Transverse colon (tissue), 4 donors: ENCODE measurements at regions of chr13 and their contacts with region 1.

Region 1: DNA sequence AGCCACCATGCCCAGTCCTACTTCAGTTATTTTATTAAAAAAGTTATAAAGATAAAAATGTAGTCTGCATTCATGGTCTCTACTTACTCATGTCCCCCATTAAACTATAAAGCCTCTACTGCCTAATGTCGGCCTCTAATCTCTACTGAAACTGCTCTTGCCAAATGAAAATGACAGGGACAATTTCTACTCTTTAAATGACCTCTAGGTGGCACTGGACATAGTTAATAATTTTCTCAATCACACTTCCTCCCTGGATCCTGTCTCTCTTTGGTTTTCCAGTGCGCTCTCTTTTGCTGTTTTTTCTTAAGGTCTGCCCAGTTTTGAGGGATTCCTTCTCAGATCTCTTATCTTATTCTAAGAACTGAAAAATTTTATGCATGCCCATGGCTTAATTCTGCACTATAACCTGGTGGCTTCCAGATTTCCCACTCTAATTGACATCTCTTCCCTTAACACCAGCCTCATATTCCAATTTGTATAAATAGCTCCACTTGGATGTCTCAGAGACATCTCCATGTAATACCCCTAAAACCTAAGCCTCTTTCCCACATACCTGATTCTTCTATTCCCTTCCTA is 54.3 kb downstream of the MTMR6 start:
- DNase-seq: no peak
- H3K4me3 ChIP-seq: no peak overlapping the region
- H3K27ac ChIP-seq: no peak overlapping the region
- H3K4me1 ChIP-seq: peaks cover 0 to 5% (median 1%) of the 10 kb centered on the region in 4 donors
- H3K27me3 ChIP-seq: peaks cover 3% of the 10 kb centered on the region
- CTCF ChIP-seq: peak; percentile 46 to 59 (median 52)
- EP300 ChIP-seq: no peak
- POLR2A ChIP-seq: no peak

Region 2: DNA sequence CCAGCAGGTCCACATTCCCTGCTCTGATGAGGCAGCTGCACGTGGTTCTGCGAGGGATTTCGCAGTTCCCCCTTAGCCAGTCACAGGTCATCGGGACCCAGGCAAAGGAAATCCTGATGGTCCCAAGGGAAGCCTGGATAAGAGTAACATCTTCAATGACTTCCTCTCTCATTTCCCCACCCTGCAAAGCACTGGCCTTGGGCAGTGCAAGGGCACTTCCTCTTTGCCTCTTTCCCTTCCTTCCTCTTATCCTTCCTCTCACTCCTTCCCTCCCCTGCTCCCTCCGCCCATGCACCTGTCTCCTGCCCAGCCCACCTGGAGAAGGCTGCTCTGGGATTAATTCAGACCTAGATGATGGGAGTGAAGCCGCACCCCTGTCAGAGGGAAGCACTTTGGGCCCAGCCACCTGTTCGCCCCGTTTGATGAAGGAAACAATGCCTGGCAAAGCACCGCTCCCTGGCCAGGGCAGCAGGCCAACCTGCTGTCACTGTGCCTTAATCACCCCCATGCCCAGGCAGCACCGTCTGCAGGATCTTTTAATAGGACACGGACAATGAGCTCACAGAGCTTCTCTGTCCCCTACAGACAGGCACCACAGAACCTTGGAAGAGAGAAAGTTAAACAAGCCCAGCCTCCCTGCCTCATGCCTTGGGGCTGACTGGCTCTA is 250.6 kb before region 1 on chr13:
- in situ Hi-C with region 1: no loop called
- intact Hi-C with region 1: no loop called
- DNase-seq: peak; percentile 56
- H3K4me3 ChIP-seq: no peak overlapping the region
- H3K27ac ChIP-seq: peak overlapping the region in 3 of 4 donors; percentile 36 to 65 (median 52)
- H3K4me1 ChIP-seq: peaks cover 0 to 15% (median 1%) of the 10 kb centered on the region in 4 donors
- H3K27me3 ChIP-seq: no peaks in the 10 kb centered on the region
- CTCF ChIP-seq: no peak
- EP300 ChIP-seq: no peak
- POLR2A ChIP-seq: no peak

Region 3: GRCh38 chr13:25375727-25376358 is 142.8 kb after region 1 on chr13:
- in situ Hi-C with region 1: loop called in 1 of 4 experiments (anchors 10 kb)
- intact Hi-C with region 1: no loop called
- DNase-seq: peak; percentile 9
- H3K4me3 ChIP-seq: no peak overlapping the region
- H3K27ac ChIP-seq: no peak overlapping the region
- H3K4me1 ChIP-seq: peaks cover 0 to 10% (median 3%) of the 10 kb centered on the region in 4 donors
- H3K27me3 ChIP-seq: peaks cover 59% of the 10 kb centered on the region
- CTCF ChIP-seq: peak; percentile 49 to 64 (median 57)
- EP300 ChIP-seq: no peak
- POLR2A ChIP-seq: no peak